ENCODE measurements at regions of chr16 and their contacts with region 1.

Region 1: DNA sequence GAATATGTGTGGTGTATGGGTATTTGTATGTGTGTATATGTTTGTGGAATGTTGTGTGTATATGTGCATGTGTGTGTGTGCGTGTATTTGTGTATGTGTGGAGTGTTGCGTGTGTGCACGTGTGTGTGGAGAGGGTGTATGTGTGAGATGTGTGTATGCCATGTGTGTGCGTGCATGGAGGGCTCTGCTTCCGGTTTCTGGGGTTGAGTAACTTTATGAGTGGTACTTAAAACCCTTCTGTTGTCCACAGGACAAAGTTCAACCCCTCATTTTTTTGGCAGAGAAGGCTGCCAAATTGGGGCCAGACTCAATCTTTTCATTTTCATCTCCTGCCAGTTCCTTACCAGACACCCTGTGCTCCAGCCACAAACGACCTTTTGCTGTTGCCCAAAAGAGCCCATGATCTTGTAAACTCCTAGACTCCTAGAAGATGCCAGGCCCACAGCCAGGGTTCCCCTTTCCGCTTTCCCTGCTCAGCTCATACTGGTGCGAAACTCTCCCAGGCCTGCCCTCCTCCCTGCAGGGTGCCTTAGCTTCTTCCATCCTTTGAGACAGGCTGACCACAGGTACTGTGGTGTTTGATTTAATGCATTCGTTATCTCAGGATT is 100.2 kb downstream of the CMIP start:
- DNase-seq: peak; percentile 55 to 62
- H3K4me3 ChIP-seq: no peak overlapping the region
- H3K27ac ChIP-seq: no peak overlapping the region
- H3K4me1 ChIP-seq: peaks cover 26 to 56% of the 10 kb centered on the region in 2 donors
- H3K27me3 ChIP-seq: no peaks in the 10 kb centered on the region
- CTCF ChIP-seq: no peak
- POLR2A ChIP-seq: no peak

Region 2: GRCh38 chr16:81444448-81445121 is 100.2 kb before region 1 on chr16 and contains the start of gene CMIP:
- intact Hi-C with region 1: loop called (anchors 5 kb)
- DNase-seq: peak; percentile 82 to 84
- H3K4me3 ChIP-seq: peak within 1 kb of the TSS; percentile 38 to 69 (median 42)
- H3K27ac ChIP-seq: peak within 1 kb of the TSS; percentile 78 to 89 (median 85)
- H3K4me1 ChIP-seq: peaks cover 41 to 42% of the 10 kb centered on the region in 2 donors
- H3K27me3 ChIP-seq: no peaks in the 10 kb centered on the region
- CTCF ChIP-seq: no peak
- POLR2A ChIP-seq: peak in 1 of 2 donors; percentile 65
- total RNA-seq, gene CMIP: 15.5 to 65.9 (median 20.2) TPM

Measured in thyroid gland (tissue), 4 donors.